ENCODE measurements at regions of chr10 and their contacts with region 1.

Region 1: GRCh38 chr10:110671788-110672579 is 27.8 kb downstream of the RBM20 start:
- DNase-seq: peak; percentile 91
- H3K4me3 ChIP-seq: peak overlapping the region; percentile 68 to 71
- H3K27ac ChIP-seq: peak overlapping the region in 1 of 2 experiments; percentile 23; a peak in 2 of 4 replicates
- H3K4me1 ChIP-seq: peaks cover 0 to 6% of the 10 kb centered on the region in 2 experiments; a peak in 2 of 4 replicates
- H3K27me3 ChIP-seq: no peaks in the 10 kb centered on the region
- CTCF ChIP-seq: peak; percentile 80
- EP300 ChIP-seq: no peak
- RAD21 ChIP-seq: peak; percentile 78

Region 2: GRCh38 chr10:110525349-110526260 is 146.4 kb before region 1 on chr10:
- CTCF ChIA-PET with region 1: no interaction called
- POLR2A ChIA-PET with region 1: no interaction called
- DNase-seq: no peak
- H3K4me3 ChIP-seq: no peak overlapping the region
- H3K27ac ChIP-seq: peak overlapping the region in 1 of 2 experiments; percentile 72; a peak in 3 of 4 replicates
- H3K4me1 ChIP-seq: peaks cover 8 to 53% of the 10 kb centered on the region in 2 experiments; a peak in 3 of 4 replicates
- H3K27me3 ChIP-seq: no peaks in the 10 kb centered on the region
- CTCF ChIP-seq: no peak
- EP300 ChIP-seq: 0 out of 4 replicates have a peak, but pooled peaks of 1 of the 2 experiments have one; percentile 48
- RAD21 ChIP-seq: no peak

Region 3: DNA sequence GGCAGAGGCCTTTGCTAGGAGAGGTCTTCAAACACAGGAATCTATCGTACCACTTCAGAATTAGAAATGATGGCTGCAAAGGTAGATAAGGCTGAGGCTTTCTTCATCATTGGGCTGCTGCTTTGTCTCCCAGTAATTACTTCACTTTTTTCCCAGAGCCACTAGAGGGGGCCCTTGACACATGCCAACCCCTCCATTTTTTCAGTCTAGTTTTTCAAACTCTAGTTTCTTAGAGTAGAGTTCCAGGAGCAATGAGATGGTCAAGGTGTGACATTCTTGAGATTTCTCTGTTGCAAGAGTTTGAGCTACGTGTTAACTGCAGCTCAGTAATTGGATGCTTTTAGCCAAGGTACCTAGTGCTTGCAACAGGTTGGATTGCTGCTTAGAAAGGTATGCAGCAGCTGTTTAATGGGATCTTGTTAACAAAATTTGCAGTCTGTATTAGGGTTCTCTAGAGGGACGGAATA is 61.6 kb before region 1 on chr10:
- CTCF ChIA-PET with region 1: interaction called, 53 read pairs
- POLR2A ChIA-PET with region 1: no interaction called
- DNase-seq: peak; percentile 69
- H3K4me3 ChIP-seq: peak overlapping the region in 1 of 2 experiments; percentile 16; a peak in 1 of 4 replicates
- H3K27ac ChIP-seq: peak overlapping the region in 1 of 2 experiments; percentile 74; a peak in 2 of 4 replicates
- H3K4me1 ChIP-seq: peaks cover 0 to 11% of the 10 kb centered on the region in 2 experiments; a peak in 2 of 4 replicates
- H3K27me3 ChIP-seq: no peaks in the 10 kb centered on the region
- CTCF ChIP-seq: peak; percentile 92
- EP300 ChIP-seq: no peak
- RAD21 ChIP-seq: peak; percentile 94

Region 4: GRCh38 chr10:110617425-110618229 is 54.4 kb before region 1 on chr10:
- CTCF ChIA-PET with region 1: interaction called, 53 read pairs
- POLR2A ChIA-PET with region 1: no interaction called
- DNase-seq: no peak
- H3K4me3 ChIP-seq: no peak overlapping the region
- H3K27ac ChIP-seq: no peak overlapping the region
- H3K4me1 ChIP-seq: peaks cover 0 to 3% of the 10 kb centered on the region in 2 experiments; a peak in 2 of 4 replicates
- H3K27me3 ChIP-seq: no peaks in the 10 kb centered on the region
- CTCF ChIP-seq: no peak
- EP300 ChIP-seq: no peak
- RAD21 ChIP-seq: no peak

Region 5: GRCh38 chr10:110636932-110637557 is 34.9 kb before region 1 on chr10:
- CTCF ChIA-PET with region 1: interaction called, 16 read pairs
- POLR2A ChIA-PET with region 1: no interaction called
- DNase-seq: peak; percentile 42
- H3K4me3 ChIP-seq: no peak overlapping the region
- H3K27ac ChIP-seq: peak overlapping the region in 1 of 2 experiments; percentile 60; a peak in 2 of 4 replicates
- H3K4me1 ChIP-seq: peaks cover 8 to 41% of the 10 kb centered on the region in 2 experiments; a peak in 3 of 4 replicates
- H3K27me3 ChIP-seq: no peaks in the 10 kb centered on the region
- CTCF ChIP-seq: no peak
- EP300 ChIP-seq: 0 out of 4 replicates have a peak, but pooled peaks of 1 of the 2 experiments have one; percentile 10
- RAD21 ChIP-seq: no peak

Region 6: DNA sequence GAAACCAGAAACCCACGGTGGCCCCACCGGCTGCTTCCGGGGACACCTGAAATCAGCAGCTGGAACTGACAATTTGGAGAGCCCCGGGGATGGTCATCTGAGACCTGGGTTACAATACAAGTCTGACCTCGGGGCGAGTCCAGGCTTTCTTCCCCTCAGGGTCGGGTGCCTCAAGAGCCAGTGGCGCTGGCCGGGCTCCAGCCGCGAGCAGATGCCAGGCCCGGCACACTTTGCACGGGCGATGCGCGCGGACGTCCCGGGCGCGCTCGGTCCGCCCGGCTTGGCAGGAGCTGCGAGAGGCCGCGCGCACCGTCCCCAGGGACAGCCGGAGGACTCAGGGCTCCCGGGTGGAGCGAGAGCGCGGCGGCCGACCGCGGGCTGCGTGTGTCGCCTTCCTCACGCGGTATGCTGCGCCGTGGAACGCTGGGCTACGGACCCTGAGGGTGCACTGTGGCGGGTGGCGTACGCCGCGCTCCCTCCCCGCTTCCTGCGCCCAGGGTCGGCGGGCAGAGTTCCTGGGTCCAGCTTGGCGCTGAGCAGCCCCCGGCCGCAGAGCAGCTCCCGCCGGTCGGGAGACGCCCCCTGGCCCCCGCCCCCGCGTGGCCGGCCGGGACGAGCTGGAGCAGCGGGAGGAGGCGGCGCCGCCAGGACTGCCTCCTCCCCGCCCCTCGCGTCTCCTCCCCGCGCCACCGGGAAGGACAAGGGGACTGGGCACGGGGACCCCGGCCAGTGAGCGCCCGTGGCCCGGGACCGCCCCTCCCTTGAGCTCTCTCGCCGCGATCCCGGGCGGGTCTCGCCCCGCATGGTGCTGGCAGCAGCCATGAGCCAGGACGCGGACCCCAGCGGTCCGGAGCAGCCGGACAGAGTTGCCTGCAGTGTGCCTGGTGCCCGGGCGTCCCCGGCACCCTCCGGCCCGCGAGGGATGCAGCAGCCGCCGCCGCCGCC is 28.1 kb before region 1 on chr10 and contains the start of gene RBM20:
- CTCF ChIA-PET with region 1: interaction called, 22 read pairs
- POLR2A ChIA-PET with region 1: no interaction called
- DNase-seq: peak; percentile 91
- H3K4me3 ChIP-seq: peak within 1 kb of the TSS; percentile 62 to 80
- H3K27ac ChIP-seq: peak within 1 kb of the TSS in 1 of 2 experiments; percentile 76; a peak in 2 of 4 replicates
- H3K4me1 ChIP-seq: peaks cover 4 to 26% of the 10 kb centered on the region in 2 experiments; a peak in 3 of 4 replicates
- H3K27me3 ChIP-seq: no peaks in the 10 kb centered on the region
- CTCF ChIP-seq: 0 out of 2 replicates have a peak, but pooled peaks have one; percentile 14
- EP300 ChIP-seq: no peak
- RAD21 ChIP-seq: no peak
- polyA plus RNA-seq, gene RBM20: 0.64 and 0.67 TPM in 2 replicates

Region 7: GRCh38 chr10:110657968-110658691 is 13.9 kb before region 1 on chr10:
- CTCF ChIA-PET with region 1: interaction called, 34 read pairs
- POLR2A ChIA-PET with region 1: no interaction called
- DNase-seq: no peak
- H3K4me3 ChIP-seq: no peak overlapping the region
- H3K27ac ChIP-seq: no peak overlapping the region
- H3K4me1 ChIP-seq: peaks cover 0 to 2% of the 10 kb centered on the region in 2 experiments; a peak in 2 of 4 replicates
- H3K27me3 ChIP-seq: no peaks in the 10 kb centered on the region
- CTCF ChIP-seq: no peak
- EP300 ChIP-seq: no peak
- RAD21 ChIP-seq: no peak

Region 8: GRCh38 chr10:110695539-110695886 is 23.5 kb after region 1 on chr10:
- CTCF ChIA-PET with region 1: interaction called, 10 read pairs
- POLR2A ChIA-PET with region 1: no interaction called
- DNase-seq: no peak
- H3K4me3 ChIP-seq: no peak overlapping the region
- H3K27ac ChIP-seq: no peak overlapping the region
- H3K4me1 ChIP-seq: peaks cover 0 to 17% of the 10 kb centered on the region in 2 experiments; a peak in 2 of 4 replicates
- H3K27me3 ChIP-seq: no peaks in the 10 kb centered on the region
- CTCF ChIP-seq: no peak
- EP300 ChIP-seq: no peak
- RAD21 ChIP-seq: no peak

Measured in SK-N-SH (cell line).